Activated naive CD4-positive, alpha-beta T cell treated with anti-CD3 and anti-CD28 coated beads for 36 hours (primary cell): ENCODE measurements at regions of chr19 and their contacts with region 1.

Region 1: GRCh38 chr19:17470068-17470841 is at the start of gene SLC27A1:
- DNase-seq: peak; percentile 90
- H3K4me3 Mint-ChIP-seq: peak within 1 kb of the TSS; percentile 84
- H3K27ac Mint-ChIP-seq: peak within 1 kb of the TSS; percentile 10
- H3K4me1 Mint-ChIP-seq: peaks cover 26% of the 10 kb centered on the region
- H3K27me3 Mint-ChIP-seq: no peaks in the 10 kb centered on the region
- total RNA-seq, gene SLC27A1: 1.2 to 1.7 TPM

Region 2: GRCh38 chr19:17346109-17346671 is 124.1 kb before region 1 on chr19:
- CTCF ChIA-PET with region 1: interaction called, 6 read pairs
- intact Hi-C with region 1: loop called (anchors 1 kb)
- DNase-seq: peak; percentile 88
- H3K4me3 Mint-ChIP-seq: no peak overlapping the region
- H3K27ac Mint-ChIP-seq: no peak overlapping the region
- H3K4me1 Mint-ChIP-seq: peaks cover 3% of the 10 kb centered on the region
- H3K27me3 Mint-ChIP-seq: peaks cover 8% of the 10 kb centered on the region

Region 3: GRCh38 chr19:17424743-17425365 is 45.4 kb before region 1 on chr19:
- CTCF ChIA-PET with region 1: interaction called, 8 read pairs
- intact Hi-C with region 1: loop called (anchors 1 kb)
- DNase-seq: peak; percentile 69
- H3K4me3 Mint-ChIP-seq: no peak overlapping the region
- H3K27ac Mint-ChIP-seq: no peak overlapping the region
- H3K4me1 Mint-ChIP-seq: peaks cover 7% of the 10 kb centered on the region
- H3K27me3 Mint-ChIP-seq: no peaks in the 10 kb centered on the region

Region 4: GRCh38 chr19:17448131-17448967 is 21.9 kb before region 1 on chr19 and contains the start of gene TMEM221:
- CTCF ChIA-PET with region 1: interaction called, 4 read pairs
- intact Hi-C with region 1: loop called (anchors 1 kb)
- DNase-seq: peak; percentile 80
- H3K4me3 Mint-ChIP-seq: peak within 1 kb of the TSS; percentile 27
- H3K27ac Mint-ChIP-seq: no peak within 1 kb of the TSS
- H3K4me1 Mint-ChIP-seq: peaks cover 14% of the 10 kb centered on the region
- H3K27me3 Mint-ChIP-seq: peaks cover 12% of the 10 kb centered on the region
- total RNA-seq, gene TMEM221: not detected

Region 5: GRCh38 chr19:17511724-17512573 is 41.7 kb after region 1 on chr19:
- CTCF ChIA-PET with region 1: no interaction called
- intact Hi-C with region 1: loop called (anchors 1 kb)
- DNase-seq: peak; percentile 85
- H3K4me3 Mint-ChIP-seq: peak overlapping the region; percentile 93
- H3K27ac Mint-ChIP-seq: peak overlapping the region; percentile 73
- H3K4me1 Mint-ChIP-seq: peaks cover 37% of the 10 kb centered on the region
- H3K27me3 Mint-ChIP-seq: no peaks in the 10 kb centered on the region

Region 6: DNA sequence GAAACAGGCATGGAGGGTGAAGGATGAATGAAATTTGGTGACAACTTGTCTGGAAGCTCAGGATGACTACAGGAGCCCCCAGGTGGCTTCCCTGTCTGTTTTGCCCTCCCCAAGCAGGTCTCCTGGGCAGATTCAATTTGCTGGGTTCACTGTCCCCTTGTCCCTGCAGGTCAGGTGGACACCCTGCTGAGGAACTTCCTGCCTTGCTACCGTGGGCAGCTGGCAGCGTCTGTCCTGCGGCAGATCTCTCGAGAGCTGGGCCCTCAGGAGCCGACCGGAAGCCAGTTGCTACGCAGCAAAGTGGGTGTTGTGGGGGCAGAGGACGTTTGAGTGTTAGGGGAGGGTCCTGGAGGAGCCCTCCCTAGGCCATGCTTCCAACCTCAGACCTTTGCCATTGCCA is 60.3 kb after region 1 on chr19:
- CTCF ChIA-PET with region 1: no interaction called
- intact Hi-C with region 1: no loop called
- DNase-seq: no peak
- H3K4me3 Mint-ChIP-seq: no peak overlapping the region
- H3K27ac Mint-ChIP-seq: no peak overlapping the region
- H3K4me1 Mint-ChIP-seq: no peaks in the 10 kb centered on the region
- H3K27me3 Mint-ChIP-seq: no peaks in the 10 kb centered on the region

Region 7: DNA sequence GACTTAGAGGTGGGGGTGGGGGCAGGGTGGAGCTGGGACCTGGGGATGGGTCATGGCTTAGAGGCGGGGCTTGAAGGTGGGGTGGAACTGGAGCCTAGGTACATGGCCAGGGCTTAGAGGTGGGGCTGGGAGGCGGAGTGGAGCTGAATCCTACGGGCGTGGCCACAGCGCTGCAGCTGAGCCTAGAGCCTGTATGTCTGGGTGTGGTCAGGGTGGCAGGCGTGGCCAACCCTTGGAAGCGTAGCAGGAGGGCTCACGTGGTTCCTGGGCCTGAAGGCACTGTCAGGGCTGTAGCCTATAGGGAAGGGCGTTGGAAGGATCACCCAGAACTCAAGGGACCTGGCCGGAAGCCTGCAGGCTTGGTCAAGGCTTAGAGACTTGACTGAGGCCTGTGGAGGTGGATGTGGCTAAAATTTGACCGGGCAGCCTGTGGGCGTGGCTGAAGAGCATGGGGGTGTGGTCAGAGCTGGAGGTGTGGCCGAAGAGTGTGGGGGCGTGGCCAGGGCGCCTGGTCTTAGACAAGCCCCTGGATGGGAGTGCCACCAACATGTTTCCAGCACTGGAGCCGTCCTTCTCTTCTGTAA is 109.5 kb after region 1 on chr19:
- CTCF ChIA-PET with region 1: interaction called, 4 read pairs
- intact Hi-C with region 1: loop called (anchors 1 kb)
- DNase-seq: no peak
- H3K4me3 Mint-ChIP-seq: no peak overlapping the region
- H3K27ac Mint-ChIP-seq: no peak overlapping the region
- H3K4me1 Mint-ChIP-seq: no peaks in the 10 kb centered on the region
- H3K27me3 Mint-ChIP-seq: no peaks in the 10 kb centered on the region